Posterior vena cava (tissue), 2 donors: ENCODE measurements at regions of chr4 and their contacts with region 1.

Region 1: GRCh38 chr4:162874048-162874447 is 292.6 kb downstream of the NAF1 start:
- DNase-seq: no peak

Region 2: GRCh38 chr4:162852642-162853041 is 21.4 kb before region 1 on chr4:
- intact Hi-C with region 1: loop called in 1 of 2 experiments (anchors 1 kb)
- DNase-seq: no peak

Region 3: GRCh38 chr4:163694385-163694784 is 820.3 kb after region 1 on chr4:
- intact Hi-C with region 1: no loop called
- DNase-seq: no peak

Region 4: DNA sequence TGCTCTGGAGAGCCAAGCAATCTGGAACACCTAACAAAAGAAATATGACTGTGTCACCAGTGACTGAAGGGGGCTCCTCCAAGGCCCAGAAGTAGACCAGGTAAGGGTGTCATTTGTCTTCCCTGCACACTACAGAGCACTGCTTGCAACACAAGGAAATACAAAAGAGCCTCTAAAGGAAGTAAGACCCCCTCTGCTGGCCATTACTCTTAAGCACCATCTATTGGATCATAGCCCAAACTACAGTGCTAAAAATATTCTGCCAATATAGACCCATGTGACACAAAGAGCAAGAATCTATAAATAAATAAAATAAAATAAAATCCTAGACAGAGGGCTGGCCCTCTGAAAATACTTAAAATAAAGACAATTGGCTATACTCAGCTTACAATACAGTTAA is 1149.2 kb after region 1 on chr4:
- intact Hi-C with region 1: loop called in 1 of 2 experiments (anchors 5 kb)
- DNase-seq: no peak